Naive thymus-derived CD4-positive, alpha-beta T cell (primary cell): ENCODE measurements at regions of chrX and their contacts with region 1.

Region 1: DNA sequence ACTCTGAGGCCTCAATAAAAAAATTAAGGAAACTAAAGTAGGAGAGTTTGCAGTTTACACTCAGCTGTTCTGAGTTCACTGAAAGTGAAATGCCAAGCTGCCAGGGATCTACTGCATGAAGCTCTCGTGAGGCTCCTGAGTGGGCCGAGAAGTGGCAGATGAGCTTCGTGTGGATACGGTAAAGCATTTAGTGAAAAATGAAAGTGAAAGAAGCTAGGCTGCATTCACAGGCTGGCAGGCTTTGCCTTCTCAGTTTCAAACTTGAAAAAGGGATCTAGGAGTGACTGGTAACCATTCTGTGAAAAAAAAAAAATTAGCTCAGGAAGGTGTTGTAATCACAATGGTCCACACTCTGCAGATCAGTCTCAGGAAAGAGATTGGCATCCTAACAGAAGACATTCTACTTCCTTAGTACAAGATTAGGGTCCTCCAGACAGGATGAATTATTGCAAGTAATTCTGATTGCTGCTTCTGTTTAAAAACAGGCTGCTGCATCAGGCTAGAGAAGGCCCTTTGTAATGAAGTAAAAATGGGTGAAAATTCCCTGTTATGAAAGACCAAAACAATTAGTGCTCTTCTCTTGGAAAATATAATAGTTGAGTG is 679.9 kb downstream of the RPA4 start:
- DNase-seq: peak; percentile 4 to 72 (median 45)
- ATAC-seq: peak; percentile 94
- H3K4me3 ChIP-seq: peak overlapping the region; percentile 46
- H3K4me3 Mint-ChIP-seq: peak overlapping the region; percentile 74 to 95 (median 86)
- H3K27ac ChIP-seq: peak overlapping the region; percentile 58
- H3K27ac Mint-ChIP-seq: peak overlapping the region; percentile 76 to 98 (median 93)
- H3K4me1 ChIP-seq: no peaks in the 10 kb centered on the region
- H3K4me1 Mint-ChIP-seq: peaks cover 0 to 33% (median 13%) of the 10 kb centered on the region in 7 donors
- H3K27me3 ChIP-seq: no peaks in the 10 kb centered on the region
- H3K27me3 Mint-ChIP-seq: no peaks in the 10 kb centered on the region

Region 2: GRCh38 chrX:96684339-96685209 is 879.1 kb before region 1 on chrX and contains the start of gene DIAPH2:
- CTCF ChIA-PET with region 1: no interaction called
- POLR2A ChIA-PET with region 1: no interaction called
- intact Hi-C with region 1: loop called (anchors 10 kb)
- DNase-seq: peak; percentile 49 to 69 (median 62)
- ATAC-seq: peak; percentile 90
- H3K4me3 ChIP-seq: peak within 1 kb of the TSS; percentile 70
- H3K4me3 Mint-ChIP-seq: peak within 1 kb of the TSS; percentile 87 to 98 (median 92)
- H3K27ac ChIP-seq: peak within 1 kb of the TSS; percentile 65
- H3K27ac Mint-ChIP-seq: peak within 1 kb of the TSS; percentile 75 to 97 (median 87)
- H3K4me1 ChIP-seq: peaks cover 5 to 6% of the 10 kb centered on the region in 2 donors
- H3K4me1 Mint-ChIP-seq: peaks cover 2 to 42% (median 36%) of the 10 kb centered on the region in 7 donors
- H3K27me3 ChIP-seq: no peaks in the 10 kb centered on the region
- H3K27me3 Mint-ChIP-seq: no peaks in the 10 kb centered on the region
- total RNA-seq, gene DIAPH2: 4.3 to 23.9 (median 7.6) TPM

Region 3: DNA sequence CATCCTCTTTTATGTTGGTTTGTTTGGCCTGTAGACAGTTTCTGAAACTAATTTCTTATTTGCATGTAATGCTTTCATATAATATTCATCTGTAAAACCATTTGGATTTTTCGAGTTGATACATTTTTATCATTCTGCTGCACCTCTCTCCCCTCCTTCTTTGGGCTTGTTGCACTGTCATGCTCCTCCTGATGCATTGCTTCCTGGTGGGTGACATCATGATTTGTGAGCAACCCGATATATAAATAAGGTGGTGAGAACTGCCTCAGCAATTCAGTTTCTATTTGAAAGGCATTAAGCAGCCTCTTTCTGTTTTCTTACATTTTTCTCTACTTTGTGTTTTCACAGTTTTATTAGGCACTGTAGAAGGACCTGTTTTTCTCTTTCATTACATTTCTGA is 164.2 kb before region 1 on chrX:
- CTCF ChIA-PET with region 1: no interaction called
- POLR2A ChIA-PET with region 1: no interaction called
- intact Hi-C with region 1: loop called in 1 of 2 experiments (anchors 5 kb)
- DNase-seq: no peak
- ATAC-seq: no peak
- H3K4me3 ChIP-seq: no peak overlapping the region
- H3K4me3 Mint-ChIP-seq: peak overlapping the region in 1 of 10 donors; percentile 43
- H3K27ac ChIP-seq: no peak overlapping the region
- H3K27ac Mint-ChIP-seq: peak overlapping the region in 1 of 9 donors; percentile 88
- H3K4me1 ChIP-seq: no peaks in the 10 kb centered on the region
- H3K4me1 Mint-ChIP-seq: peaks cover 4 to 47% (median 7%) of the 10 kb centered on the region in 7 donors
- H3K27me3 ChIP-seq: no peaks in the 10 kb centered on the region
- H3K27me3 Mint-ChIP-seq: no peaks in the 10 kb centered on the region